ENCODE measurements at regions of chr2 and their contacts with region 1.

Region 1: DNA sequence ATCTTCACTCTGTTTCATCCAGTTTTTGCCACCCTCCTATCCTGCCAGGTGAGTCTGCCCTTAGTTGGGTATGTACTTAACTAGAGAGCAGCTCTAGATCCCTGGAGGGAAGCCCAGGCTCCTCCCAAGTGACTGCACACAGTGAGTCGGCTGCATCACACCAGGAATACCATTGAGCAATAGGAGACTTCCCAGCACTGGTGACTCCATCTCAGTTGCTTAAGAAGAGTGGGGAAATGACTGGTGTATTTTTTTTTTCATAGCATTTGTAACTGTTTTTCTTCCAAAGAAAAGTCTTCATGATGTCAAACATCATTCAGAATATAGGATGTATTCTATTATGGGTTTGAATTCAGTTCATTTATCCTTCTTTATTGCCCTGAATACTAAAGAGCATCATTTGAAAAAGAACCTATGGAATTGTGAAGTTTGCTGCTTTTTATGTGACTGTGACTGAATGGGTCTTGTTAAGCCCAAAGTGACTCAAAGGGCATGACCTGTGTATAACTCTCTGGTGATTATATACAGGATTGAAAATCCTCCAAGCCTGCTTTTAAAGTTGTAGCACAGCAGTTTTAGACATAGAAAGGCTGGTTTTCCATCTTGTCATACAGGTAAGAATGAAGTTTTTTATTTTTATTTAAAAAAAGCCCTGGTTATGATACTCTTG is 84.3 kb downstream of the MAP3K20 start:
- DNase-seq: peak; percentile 92 to 93
- ATAC-seq: peak; percentile 95
- H3K4me3 ChIP-seq: no peak overlapping the region
- H3K27ac ChIP-seq: peak overlapping the region in 1 of 2 donors; percentile 90
- H3K4me1 ChIP-seq: peaks cover 4 to 6% of the 10 kb centered on the region in 2 donors
- H3K27me3 ChIP-seq: no peaks in the 10 kb centered on the region

Region 2: GRCh38 chr2:173199294-173199693 is 39.4 kb after region 1 on chr2:
- intact Hi-C with region 1: loop called (anchors 5 kb)
- DNase-seq: no peak
- ATAC-seq: no peak
- H3K4me3 ChIP-seq: no peak overlapping the region
- H3K27ac ChIP-seq: no peak overlapping the region
- H3K4me1 ChIP-seq: peaks cover 4 to 8% of the 10 kb centered on the region in 2 donors
- H3K27me3 ChIP-seq: no peaks in the 10 kb centered on the region

Region 3: DNA sequence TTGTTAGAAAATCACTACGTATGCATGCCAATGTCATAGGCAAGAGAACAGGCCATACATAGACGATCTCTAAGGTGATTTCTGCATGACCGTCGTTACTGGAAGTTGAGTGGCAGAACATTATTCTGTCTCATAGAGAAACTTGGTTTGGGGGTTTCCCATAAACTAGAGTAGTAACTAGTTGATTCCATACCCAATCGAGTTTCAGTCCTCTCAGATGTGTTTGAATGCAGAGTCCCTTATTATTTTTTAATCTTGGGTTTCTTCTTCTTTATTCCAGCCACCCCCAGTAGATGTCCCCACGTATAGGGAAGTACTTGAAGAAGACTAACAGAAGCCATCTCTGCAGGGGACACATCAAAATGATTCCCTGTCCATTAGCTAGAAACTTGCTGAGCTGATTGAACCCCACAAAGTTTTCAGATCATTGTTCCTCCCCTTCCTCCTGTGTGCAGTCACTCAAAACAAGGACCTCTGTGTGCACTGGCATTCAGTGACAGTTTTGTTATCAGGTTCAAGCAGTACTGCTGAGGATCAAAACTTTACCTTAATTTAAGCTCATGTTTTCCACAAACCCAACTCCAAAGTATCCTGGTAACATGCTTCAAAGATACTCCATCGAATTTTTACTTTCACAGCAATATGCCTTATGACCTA is 126.4 kb after region 1 on chr2:
- intact Hi-C with region 1: no loop called
- DNase-seq: no peak
- ATAC-seq: no peak
- H3K4me3 ChIP-seq: no peak overlapping the region
- H3K27ac ChIP-seq: no peak overlapping the region
- H3K4me1 ChIP-seq: no peaks in the 10 kb centered on the region
- H3K27me3 ChIP-seq: no peaks in the 10 kb centered on the region

Measured in aorta (tissue), 5 donors.